ENCODE measurements at regions of chr11 and their contacts with region 1.

Region 1: GRCh38 chr11:56841210-56841810 is 92.8 kb upstream of the OR9G4 start:
- DNase-seq: peak in 1 of 2 donors; percentile 41
- H3K4me3 ChIP-seq: no peak overlapping the region
- CTCF ChIP-seq: no peak
- POLR2A ChIP-seq: no peak

Region 2: GRCh38 chr11:57124917-57125316 is 283.6 kb after region 1 on chr11:
- intact Hi-C with region 1: loop called (anchors 5 kb)
- DNase-seq: no peak
- H3K4me3 ChIP-seq: no peak overlapping the region
- CTCF ChIP-seq: no peak
- POLR2A ChIP-seq: no peak